HCT116 (cell line): ENCODE measurements at regions of chr1 and their contacts with region 1.

Region 1: DNA sequence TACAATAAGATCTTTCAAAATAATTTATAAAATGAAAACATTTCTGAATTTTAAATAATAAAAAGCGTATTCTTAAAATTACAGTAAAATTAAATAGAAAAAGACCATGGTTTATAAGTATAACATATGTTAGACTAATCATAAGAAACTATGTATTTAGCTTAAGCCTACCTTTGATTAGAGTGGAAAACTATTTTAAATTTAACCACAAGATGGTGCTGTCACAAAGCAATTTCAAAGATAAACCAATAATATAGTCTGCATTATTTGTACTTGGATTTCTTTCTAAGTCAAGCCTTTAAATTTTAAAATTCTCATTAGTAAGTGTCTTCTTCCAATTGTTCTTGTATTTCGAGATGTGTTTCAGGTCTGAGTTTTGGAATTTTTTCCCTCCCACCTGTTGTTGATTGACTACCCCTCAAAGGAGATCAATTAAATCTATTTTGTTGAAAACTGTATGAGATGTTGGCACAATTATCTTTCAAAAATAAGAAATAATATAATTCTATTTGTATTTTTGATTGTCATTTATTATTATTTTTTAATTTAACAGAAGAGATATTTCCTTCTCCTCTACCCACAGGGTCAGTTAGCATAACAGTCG is 459.8 kb downstream of the KCNT2 start:
- DNase-seq: peak; percentile 22
- ATAC-seq: peak; percentile 57; the same call in 1 of the 2 replicates
- H3K4me3 ChIP-seq: no peak overlapping the region
- H3K27ac ChIP-seq: no peak overlapping the region
- H3K4me1 ChIP-seq: no peaks in the 10 kb centered on the region
- H3K27me3 ChIP-seq: no peaks in the 10 kb centered on the region
- CTCF ChIP-seq: peak; percentile 26 to 59 (median 47); a peak in 3 of 6 replicates
- POLR2A ChIP-seq: no peak
- RAD21 ChIP-seq: peak; percentile 77

Region 2: GRCh38 chr1:195939844-195940243 is 208.6 kb before region 1 on chr1:
- CTCF ChIA-PET with region 1: interaction called, 5 read pairs
- POLR2A ChIA-PET with region 1: no interaction called
- RAD21 ChIA-PET with region 1: no interaction called
- intact Hi-C with region 1: loop called (anchors 2 kb)
- DNase-seq: no peak
- ATAC-seq: peak; percentile 47; the same call in 1 of the 2 replicates
- H3K4me3 ChIP-seq: no peak overlapping the region
- H3K27ac ChIP-seq: no peak overlapping the region
- H3K4me1 ChIP-seq: no peaks in the 10 kb centered on the region
- H3K27me3 ChIP-seq: no peaks in the 10 kb centered on the region
- CTCF ChIP-seq: peak; percentile 10 to 29 (median 27); a peak in 2 of 6 replicates
- POLR2A ChIP-seq: no peak
- RAD21 ChIP-seq: peak; percentile 48

Region 3: GRCh38 chr1:196121181-196121580 is 27.3 kb before region 1 on chr1:
- CTCF ChIA-PET with region 1: no interaction called
- POLR2A ChIA-PET with region 1: no interaction called
- RAD21 ChIA-PET with region 1: no interaction called
- intact Hi-C with region 1: no loop called
- DNase-seq: no peak
- ATAC-seq: no peak
- H3K4me3 ChIP-seq: no peak overlapping the region
- H3K27ac ChIP-seq: no peak overlapping the region
- H3K4me1 ChIP-seq: no peaks in the 10 kb centered on the region
- H3K27me3 ChIP-seq: no peaks in the 10 kb centered on the region
- CTCF ChIP-seq: no peak
- POLR2A ChIP-seq: no peak
- RAD21 ChIP-seq: no peak

Region 4: DNA sequence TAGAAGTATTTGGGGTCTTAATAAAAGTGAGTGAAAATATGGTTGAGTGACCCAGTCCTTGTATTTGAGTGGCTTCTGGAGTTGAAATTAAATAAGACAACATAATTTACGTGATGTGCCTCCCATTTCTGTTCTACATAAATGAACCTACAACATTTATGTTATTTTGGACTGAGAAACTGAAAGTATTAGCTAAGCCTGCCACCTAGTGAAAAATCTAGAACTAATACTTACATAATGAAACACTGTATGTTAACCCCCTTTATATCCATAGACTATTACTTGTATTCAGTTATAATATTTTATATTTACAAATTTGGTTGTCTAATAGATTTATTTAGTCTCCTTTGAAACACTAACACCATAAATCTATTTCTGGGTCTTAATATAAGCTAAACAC is 160.9 kb after region 1 on chr1:
- CTCF ChIA-PET with region 1: interaction called, 63 read pairs
- POLR2A ChIA-PET with region 1: no interaction called
- RAD21 ChIA-PET with region 1: interaction called, 3 read pairs
- intact Hi-C with region 1: loop called (anchors 1 kb)
- DNase-seq: peak; percentile 27
- ATAC-seq: no peak
- H3K4me3 ChIP-seq: no peak overlapping the region
- H3K27ac ChIP-seq: no peak overlapping the region
- H3K4me1 ChIP-seq: no peaks in the 10 kb centered on the region
- H3K27me3 ChIP-seq: no peaks in the 10 kb centered on the region
- CTCF ChIP-seq: peak in 2 of 3 experiments; percentile 40 to 45; a peak in 3 of 6 replicates
- POLR2A ChIP-seq: no peak
- RAD21 ChIP-seq: peak; percentile 70

Region 5: DNA sequence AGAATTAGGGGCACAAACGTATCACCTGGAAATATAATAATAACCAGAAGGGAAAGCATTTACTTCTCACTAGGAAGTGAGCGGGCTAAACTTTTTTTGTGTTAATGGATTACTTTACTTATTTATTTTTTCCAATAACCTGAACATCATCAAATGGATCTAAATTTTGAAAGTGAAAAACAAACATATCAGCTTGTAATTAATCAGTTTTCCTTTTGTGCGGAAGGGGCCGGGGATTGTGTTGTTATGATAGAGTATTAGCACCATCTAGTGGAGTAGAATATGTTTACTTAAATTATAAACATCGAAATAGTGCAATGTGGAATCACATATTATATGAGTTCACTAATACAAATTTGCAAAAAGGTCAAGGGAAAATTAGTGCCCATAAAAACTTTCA is 512.4 kb after region 1 on chr1:
- CTCF ChIA-PET with region 1: interaction called, 37 read pairs
- POLR2A ChIA-PET with region 1: no interaction called
- RAD21 ChIA-PET with region 1: interaction called in 1 of 2 experiments, 3 read pairs
- intact Hi-C with region 1: loop called (anchors 1 kb)
- DNase-seq: peak; percentile 23
- ATAC-seq: peak; percentile 69; the same call in 1 of the 2 replicates
- H3K4me3 ChIP-seq: no peak overlapping the region
- H3K27ac ChIP-seq: no peak overlapping the region
- H3K4me1 ChIP-seq: no peaks in the 10 kb centered on the region
- H3K27me3 ChIP-seq: no peaks in the 10 kb centered on the region
- CTCF ChIP-seq: peak in 2 of 3 experiments; percentile 55 to 60; a peak in 4 of 6 replicates
- POLR2A ChIP-seq: no peak
- RAD21 ChIP-seq: peak; percentile 82